Thyroid gland (tissue), 4 donors: ENCODE measurements at regions of chr1 and their contacts with region 1.

Region 1: GRCh38 chr1:200279810-200280411 is 129.9 kb downstream of the ZNF281 start:
- DNase-seq: peak; percentile 14 to 36
- H3K4me3 ChIP-seq: no peak overlapping the region
- H3K27ac ChIP-seq: no peak overlapping the region
- H3K4me1 ChIP-seq: no peaks in the 10 kb centered on the region
- H3K27me3 ChIP-seq: no peaks in the 10 kb centered on the region
- CTCF ChIP-seq: peak; percentile 18 to 55 (median 36)
- POLR2A ChIP-seq: no peak

Region 2: GRCh38 chr1:200473698-200474371 is 193.9 kb after region 1 on chr1:
- intact Hi-C with region 1: no loop called
- DNase-seq: no peak
- H3K4me3 ChIP-seq: no peak overlapping the region
- H3K27ac ChIP-seq: no peak overlapping the region
- H3K4me1 ChIP-seq: no peaks in the 10 kb centered on the region
- H3K27me3 ChIP-seq: no peaks in the 10 kb centered on the region
- CTCF ChIP-seq: no peak
- POLR2A ChIP-seq: no peak

Region 3: DNA sequence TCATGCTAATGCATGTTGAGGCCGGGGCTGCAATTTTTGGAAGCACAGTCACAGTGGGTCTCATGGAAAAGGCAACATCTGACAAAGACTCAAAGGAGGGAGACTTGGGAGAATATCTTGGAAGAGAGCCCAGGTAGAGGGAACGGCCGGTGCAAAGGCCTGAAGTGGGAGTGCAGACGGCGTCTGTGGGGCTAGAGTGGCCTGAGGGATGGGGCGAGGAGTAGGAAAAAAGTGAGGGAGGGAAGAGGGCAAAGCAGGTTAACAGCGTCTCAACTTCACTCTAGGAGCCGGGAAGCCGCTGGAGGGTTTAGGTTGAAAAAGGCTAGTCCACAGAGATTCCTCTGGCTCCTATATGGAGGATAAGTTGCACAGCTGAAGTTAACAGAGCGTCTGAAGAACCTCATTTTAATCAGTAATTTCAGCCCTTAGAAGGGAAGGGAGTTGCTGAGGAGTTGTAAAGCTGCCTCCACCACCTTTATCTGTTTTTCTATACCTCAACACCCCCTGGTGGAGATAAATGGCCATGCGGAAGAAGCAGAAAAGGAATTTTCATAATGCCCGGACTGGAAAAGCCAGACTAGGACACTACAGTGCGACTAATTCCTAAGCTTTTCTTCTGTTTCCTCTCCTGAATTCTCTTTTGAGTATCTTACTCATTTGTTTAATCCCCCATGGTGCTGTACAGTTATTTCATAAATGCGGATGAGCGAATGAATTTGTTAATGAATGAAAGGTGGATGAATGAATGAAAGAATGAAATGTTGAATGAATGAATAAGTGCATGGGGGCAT is 208.7 kb after region 1 on chr1:
- intact Hi-C with region 1: loop called (anchors 10 kb)
- DNase-seq: peak; percentile 44 to 56
- H3K4me3 ChIP-seq: no peak overlapping the region
- H3K27ac ChIP-seq: no peak overlapping the region
- H3K4me1 ChIP-seq: no peaks in the 10 kb centered on the region
- H3K27me3 ChIP-seq: no peaks in the 10 kb centered on the region
- CTCF ChIP-seq: peak; percentile 33 to 76 (median 73)
- POLR2A ChIP-seq: no peak